ENCODE measurements at regions of chr9 and their contacts with region 1.

Region 1: GRCh38 chr9:130997925-130998596 is 10.9 kb upstream of the LAMC3 start:
- DNase-seq: peak; percentile 52 to 84
- H3K4me3 ChIP-seq: no peak overlapping the region
- H3K27ac ChIP-seq: no peak overlapping the region
- H3K4me1 ChIP-seq: no peaks in the 10 kb centered on the region
- H3K27me3 ChIP-seq: peaks cover 29% of the 10 kb centered on the region
- CTCF ChIP-seq: peak; percentile 88

Region 2: DNA sequence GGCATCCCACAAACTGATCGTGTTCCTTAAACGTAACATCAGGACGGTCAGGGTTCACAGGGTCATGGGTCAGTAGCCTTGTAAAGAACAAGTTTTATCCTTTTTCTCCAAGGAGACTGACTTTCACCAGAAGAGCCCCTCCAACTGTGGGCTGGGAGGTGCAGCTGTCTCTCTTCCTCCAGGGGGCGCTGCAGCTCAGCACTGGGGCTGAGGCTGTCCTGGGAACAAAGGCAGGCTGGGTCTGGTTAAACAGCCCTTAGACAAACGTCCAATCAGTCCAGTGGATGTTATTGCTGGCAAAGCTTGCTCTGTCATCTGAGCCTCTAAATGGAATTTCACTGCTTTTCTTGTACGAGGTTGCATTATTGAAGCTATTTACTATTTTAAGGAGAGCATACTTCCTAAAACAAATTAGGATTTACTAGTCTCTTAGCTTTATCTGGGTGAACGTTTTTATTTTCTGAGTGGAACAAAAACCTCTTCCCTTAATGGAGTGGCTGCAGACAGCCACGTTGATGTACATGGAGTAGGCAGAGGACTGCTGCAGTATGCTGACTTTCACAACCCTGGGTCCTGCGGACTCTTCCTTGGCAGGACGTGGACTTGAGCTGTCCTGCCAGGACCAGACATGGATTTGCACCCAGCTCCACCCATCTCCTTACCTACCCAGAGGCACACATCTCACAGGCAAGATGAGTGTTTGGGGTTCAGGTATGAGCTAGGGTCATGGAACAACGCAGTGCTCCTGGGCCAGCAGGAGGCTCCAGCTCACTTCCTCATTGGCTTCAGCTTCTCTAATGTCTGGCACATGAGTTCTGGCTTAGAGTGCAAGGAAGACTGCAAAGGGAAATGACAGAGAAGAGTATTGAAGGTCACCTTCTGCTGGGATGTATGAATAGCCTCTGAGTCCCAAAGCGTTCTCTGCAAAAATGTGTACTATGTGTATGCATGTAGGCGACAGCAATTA is 296.7 kb before region 1 on chr9:
- CTCF ChIA-PET with region 1: interaction called, 4 read pairs
- POLR2A ChIA-PET with region 1: no interaction called
- intact Hi-C with region 1: loop called (anchors 2 kb)
- DNase-seq: peak in 1 of 2 experiments; percentile 71
- H3K4me3 ChIP-seq: no peak overlapping the region
- H3K27ac ChIP-seq: no peak overlapping the region
- H3K4me1 ChIP-seq: no peaks in the 10 kb centered on the region
- H3K27me3 ChIP-seq: no peaks in the 10 kb centered on the region
- CTCF ChIP-seq: peak; percentile 94

Region 3: DNA sequence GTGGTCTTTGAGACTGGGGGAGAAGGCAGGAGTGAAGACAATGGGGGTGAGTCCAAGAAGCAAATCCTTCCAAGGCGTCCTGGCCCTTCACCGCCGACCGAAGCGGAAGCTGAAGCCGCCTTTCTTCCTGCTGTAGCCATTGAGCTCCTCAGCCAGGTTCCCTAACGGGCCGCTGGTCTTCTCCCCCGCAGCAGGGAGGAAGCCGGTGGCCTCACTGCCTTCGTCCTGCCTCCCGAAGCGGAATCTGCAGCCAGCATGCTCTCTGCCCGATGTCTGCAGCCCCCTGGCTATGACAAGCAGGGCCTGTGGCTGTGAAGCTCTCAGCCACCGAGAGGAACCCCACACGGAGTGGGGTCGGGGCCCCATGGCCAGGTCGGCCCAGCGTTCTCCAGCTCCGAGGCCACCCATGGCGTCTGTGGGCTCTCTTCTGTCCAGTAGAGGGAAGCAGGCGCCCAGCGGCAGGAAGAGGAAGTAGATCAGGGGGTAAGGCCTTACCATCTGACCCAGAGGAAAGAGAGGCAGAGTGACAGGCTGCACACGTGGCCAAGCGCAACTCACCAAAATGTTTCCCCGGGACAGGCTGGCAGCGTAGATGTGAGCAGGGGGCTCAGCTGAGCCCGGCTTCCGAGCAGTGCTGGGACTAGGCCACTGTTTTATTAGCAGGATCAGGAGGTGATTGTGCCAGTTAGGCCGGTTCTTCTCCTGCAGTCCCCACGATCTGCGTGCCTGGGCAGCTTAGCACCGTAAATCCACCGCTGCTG is 104.5 kb before region 1 on chr9:
- CTCF ChIA-PET with region 1: no interaction called
- POLR2A ChIA-PET with region 1: no interaction called
- intact Hi-C with region 1: loop called (anchors 5 kb)
- DNase-seq: no peak
- H3K4me3 ChIP-seq: no peak overlapping the region
- H3K27ac ChIP-seq: no peak overlapping the region
- H3K4me1 ChIP-seq: no peaks in the 10 kb centered on the region
- H3K27me3 ChIP-seq: no peaks in the 10 kb centered on the region
- CTCF ChIP-seq: peak; percentile 26; the same call in 1 of the 2 replicates

Region 4: DNA sequence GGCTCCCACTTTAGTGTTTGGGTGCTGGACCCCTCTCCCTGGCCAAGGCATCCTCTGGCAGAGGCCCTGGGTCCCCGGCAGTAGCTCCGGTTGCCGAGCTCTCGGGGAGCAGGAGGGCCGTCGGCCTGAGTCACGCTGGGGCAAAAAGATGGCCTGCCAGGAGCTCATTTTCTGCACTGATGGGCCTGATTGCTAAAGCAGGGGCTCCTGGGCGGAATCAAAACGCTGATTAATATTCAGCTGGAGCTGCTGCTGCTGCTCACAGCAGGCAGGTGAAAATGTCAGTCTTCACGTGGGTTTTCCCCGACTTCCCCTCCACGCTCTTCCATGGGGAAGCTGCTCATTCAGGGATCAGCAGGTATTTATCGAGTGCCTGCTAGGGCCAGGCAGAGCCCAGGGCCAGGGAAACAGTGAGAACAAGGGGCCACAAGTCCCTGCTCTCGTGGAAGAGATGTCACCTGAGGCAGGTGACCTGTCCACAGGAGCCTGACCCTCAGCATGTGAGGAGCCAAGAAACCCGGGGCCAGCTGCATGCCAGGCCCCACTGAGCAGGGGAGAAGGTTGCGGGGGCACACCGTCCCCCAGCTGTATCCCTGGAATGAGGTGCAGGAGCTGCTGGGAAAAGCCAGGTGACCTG is 33.1 kb after region 1 on chr9:
- CTCF ChIA-PET with region 1: no interaction called
- POLR2A ChIA-PET with region 1: no interaction called
- intact Hi-C with region 1: no loop called
- DNase-seq: no peak
- H3K4me3 ChIP-seq: no peak overlapping the region
- H3K27ac ChIP-seq: no peak overlapping the region
- H3K4me1 ChIP-seq: no peaks in the 10 kb centered on the region
- H3K27me3 ChIP-seq: peaks cover 30% of the 10 kb centered on the region; the same call in 1 of the 2 replicates
- CTCF ChIP-seq: no peak